ENCODE measurements at regions of chr11 and their contacts with region 1.

Region 1: GRCh38 chr11:102346748-102347461 is at the start of gene BIRC2:
- DNase-seq: peak; percentile 98
- ATAC-seq: peak; percentile 97
- total RNA-seq, gene BIRC2: 32.4 TPM

Region 2: GRCh38 chr11:102287964-102288724 is 58.8 kb before region 1 on chr11:
- intact Hi-C with region 1: loop called (anchors 2 kb)
- DNase-seq: no peak
- ATAC-seq: peak; percentile 77

Region 3: GRCh38 chr11:102318469-102318868 is 28.4 kb before region 1 on chr11:
- intact Hi-C with region 1: loop called (anchors 2 kb)
- DNase-seq: no peak
- ATAC-seq: no peak

Region 4: DNA sequence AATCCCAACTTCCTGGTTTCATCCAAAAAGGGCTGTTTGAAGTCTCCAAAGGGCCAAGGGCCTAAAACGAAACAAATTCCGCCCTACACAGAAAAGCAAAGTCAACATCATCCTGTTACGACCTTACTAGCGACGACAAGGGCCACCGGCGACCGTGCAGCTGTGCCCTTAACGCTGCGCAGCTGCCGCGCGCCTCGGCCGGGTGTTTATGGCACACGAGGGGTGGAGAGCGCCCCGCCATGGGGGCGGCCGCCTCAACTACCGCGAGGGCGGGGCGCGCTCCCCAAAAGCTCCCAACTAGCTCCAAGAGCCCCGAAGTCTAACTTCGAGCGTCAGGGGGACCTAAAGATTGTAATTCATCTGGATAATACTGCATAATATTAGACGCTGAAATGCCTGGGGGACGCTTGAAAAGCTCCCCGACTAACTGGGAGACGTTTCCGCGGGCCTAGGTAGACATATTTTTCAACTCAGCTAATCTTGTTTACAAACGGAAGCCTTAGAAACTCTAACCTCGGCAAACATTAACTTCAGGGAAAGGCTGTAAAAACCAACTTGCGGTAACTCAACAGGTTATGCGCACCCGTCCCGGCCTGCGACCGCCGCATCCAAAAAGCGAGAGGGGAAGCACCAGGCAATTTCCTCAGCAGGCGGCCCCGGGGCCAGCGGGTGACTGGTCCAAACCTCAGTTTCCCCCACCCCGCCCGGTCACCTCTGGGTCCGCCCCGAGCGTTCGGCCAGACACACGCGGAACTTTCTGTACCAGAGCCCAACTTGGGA is 105.0 kb after region 1 on chr11:
- intact Hi-C with region 1: loop called (anchors 1 kb)
- DNase-seq: peak; percentile 88
- ATAC-seq: peak; percentile 82

Measured in Right ventricle myocardium inferior (tissue), 1 donor.